Dendritic cell treated with granulocyte-macrophage colony-stimulating factor and Interleukin-4, amounts not matched to agents 40 ng/mL and 50 ng/mL, for 4 days (primary cell): ENCODE measurements at regions of chr18 and their contacts with region 1.

Region 1: DNA sequence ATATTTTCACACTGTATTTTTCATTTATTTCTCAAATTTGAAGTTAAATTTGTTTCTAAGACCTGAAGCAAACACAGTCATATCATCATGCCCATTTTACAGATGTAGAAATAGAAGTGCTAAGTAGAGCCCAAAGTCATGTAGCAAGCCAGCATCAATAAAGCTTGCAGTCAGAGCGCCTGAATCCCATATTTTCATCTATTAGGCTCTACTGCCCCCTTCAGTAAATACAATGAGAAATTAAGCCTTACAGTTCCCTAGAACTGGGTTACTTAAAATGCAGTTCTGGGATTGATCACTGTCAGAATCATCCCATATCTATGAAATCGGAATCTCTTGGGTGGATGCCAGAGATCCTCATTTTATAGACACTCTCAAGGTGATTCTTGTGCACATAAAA is 419.9 kb downstream of the TGIF1 start:
- H3K4me3 Mint-ChIP-seq: no peak overlapping the region
- H3K27ac Mint-ChIP-seq: no peak overlapping the region
- H3K4me1 Mint-ChIP-seq: peaks cover 30% of the 10 kb centered on the region
- H3K27me3 Mint-ChIP-seq: no peaks in the 10 kb centered on the region

Region 2: DNA sequence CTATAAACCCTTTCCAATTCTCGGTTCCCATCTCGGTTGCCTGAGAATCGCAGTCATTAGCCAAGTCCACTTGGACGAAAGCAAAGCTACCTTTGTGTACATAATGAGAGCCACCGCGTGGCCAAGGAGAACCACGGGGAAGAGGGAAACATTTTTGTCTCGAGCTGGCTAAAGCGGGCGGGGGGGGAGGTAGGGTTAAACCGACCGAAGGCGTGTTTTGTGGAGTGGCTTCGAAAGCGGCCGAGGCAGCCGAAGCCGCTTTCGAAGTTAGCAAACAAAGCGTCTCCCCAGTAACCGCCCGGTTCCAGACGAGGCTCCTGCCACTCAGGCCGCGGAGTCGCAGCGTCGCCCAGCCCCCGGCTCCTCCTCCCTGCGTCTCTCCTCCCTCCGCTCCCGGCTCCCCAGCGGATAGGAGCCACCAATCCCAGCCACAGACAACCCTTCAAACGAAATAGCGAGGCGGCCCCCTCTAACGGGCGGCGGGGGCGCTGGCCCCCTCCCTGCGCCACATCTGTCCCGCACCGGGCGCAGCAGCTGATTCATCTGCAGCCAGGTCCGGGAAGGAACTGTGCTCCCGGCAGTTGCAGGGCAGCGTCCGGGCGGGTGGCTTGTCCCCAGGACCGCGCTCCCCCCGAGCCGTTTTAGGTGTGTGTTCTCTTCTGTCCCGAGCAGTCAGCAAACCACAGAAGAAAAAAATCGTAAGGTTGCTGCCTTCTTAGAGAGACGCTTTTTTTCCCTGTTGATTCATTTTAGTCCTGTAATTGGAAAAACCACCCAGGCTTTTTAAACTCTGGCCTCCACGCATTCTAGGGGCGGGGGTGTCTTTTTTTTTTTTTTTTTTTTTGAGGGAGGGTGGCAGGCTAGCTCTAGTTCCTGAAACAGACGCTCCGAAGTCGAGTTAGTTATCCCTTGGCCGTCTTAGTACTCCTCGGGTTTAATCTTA is 421.7 kb before region 1 on chr18:
- intact Hi-C with region 1: loop called (anchors 10 kb)
- H3K4me3 Mint-ChIP-seq: peak overlapping the region; percentile 90
- H3K27ac Mint-ChIP-seq: peak overlapping the region; percentile 99
- H3K4me1 Mint-ChIP-seq: peaks cover 33% of the 10 kb centered on the region
- H3K27me3 Mint-ChIP-seq: no peaks in the 10 kb centered on the region

Region 3: DNA sequence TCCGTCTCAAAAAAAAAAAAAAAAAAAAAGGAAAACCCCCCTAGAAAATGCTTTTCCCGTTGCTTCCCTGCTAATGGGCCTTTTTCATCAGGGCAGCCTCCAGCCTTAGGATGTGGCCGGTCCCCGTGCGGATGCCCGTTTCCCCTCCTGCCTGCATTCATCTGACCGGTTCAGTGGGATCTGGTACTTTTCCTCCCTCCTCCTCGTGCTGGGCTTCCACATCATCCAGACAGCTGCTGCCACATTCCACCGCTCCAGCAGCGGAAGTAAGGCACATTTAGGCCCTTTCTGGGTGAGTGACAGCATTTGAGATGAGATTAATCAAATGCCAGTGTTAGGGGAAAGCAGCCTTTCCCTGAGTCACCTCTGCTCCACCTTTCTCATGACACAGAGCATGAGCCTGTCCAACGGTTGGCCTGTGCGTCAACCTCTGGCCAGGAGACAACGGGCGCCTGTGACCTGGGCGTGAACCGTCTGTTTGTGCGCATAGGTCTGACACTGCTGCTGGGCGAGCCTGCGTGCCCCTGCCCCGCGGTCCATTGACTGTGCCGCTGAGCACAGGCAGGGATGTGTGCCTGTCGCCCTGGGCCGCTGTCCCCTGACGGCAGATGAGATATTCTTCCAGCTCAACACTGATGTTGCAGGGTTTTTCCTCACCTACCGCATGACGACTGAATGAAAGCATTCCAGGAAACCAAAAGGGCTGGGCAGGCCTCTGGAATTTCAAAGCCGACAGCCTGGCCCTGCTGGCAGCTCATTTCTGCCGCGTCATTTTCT is 245.9 kb before region 1 on chr18:
- intact Hi-C with region 1: no loop called
- H3K4me3 Mint-ChIP-seq: no peak overlapping the region
- H3K27ac Mint-ChIP-seq: peak overlapping the region; percentile 60
- H3K4me1 Mint-ChIP-seq: peaks cover 23% of the 10 kb centered on the region
- H3K27me3 Mint-ChIP-seq: no peaks in the 10 kb centered on the region

Region 4: DNA sequence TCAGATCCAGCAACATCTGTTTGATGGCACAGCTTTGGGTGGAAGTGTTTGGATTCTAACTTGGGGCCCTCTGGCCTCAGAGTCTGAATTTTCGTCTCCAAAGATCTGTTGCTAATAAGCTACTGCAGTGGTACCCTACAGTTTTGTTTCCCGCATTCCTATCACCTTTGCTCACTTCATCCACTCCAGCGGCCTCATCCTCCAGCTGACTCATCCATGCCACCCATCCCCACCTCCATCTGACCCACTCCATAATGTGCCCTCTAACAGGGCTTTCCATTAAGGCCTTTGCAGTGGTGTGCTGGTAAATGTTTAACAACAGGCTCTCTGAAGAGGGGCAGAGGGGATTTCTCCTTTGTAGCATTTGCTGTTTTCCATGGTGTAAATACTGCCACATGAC is 194.4 kb before region 1 on chr18:
- intact Hi-C with region 1: loop called (anchors 10 kb)
- H3K4me3 Mint-ChIP-seq: no peak overlapping the region
- H3K27ac Mint-ChIP-seq: no peak overlapping the region
- H3K4me1 Mint-ChIP-seq: peaks cover 39% of the 10 kb centered on the region
- H3K27me3 Mint-ChIP-seq: peaks cover 3% of the 10 kb centered on the region

Region 5: GRCh38 chr18:3771121-3771971 is 98.5 kb before region 1 on chr18:
- intact Hi-C with region 1: loop called (anchors 2 kb)
- H3K4me3 Mint-ChIP-seq: peak overlapping the region; percentile 80
- H3K27ac Mint-ChIP-seq: peak overlapping the region; percentile 40
- H3K4me1 Mint-ChIP-seq: peaks cover 14% of the 10 kb centered on the region
- H3K27me3 Mint-ChIP-seq: peaks cover 5% of the 10 kb centered on the region

Region 6: DNA sequence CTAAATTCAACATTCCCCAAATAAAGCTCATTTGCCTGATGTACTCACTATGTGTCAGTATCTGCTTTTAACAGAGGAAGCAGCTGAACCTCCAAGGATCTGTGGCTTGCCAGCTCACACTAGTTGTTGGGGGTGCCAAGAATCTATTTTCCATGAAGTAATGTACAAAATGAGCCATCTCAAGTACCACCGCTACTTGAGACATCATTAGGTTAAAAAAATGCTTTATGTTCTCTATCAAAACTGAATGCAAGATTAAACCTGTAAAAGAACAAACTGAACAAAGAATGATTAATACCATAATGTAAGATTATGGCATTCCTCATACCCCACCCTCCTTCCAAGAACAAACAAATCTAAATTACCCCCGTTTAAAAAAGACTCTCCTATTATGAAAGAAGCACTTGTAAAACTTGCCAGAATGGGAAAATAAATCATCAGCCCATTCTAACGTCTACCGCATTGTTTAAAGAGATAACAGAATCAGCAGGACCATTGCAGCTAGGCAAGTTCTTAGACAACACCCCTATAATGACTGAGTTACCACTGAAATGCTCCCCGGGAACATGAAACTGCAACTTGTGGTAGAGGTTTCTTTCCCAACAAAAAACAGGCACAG is 113.6 kb after region 1 on chr18:
- intact Hi-C with region 1: no loop called
- H3K4me3 Mint-ChIP-seq: no peak overlapping the region
- H3K27ac Mint-ChIP-seq: no peak overlapping the region
- H3K4me1 Mint-ChIP-seq: peaks cover 6% of the 10 kb centered on the region
- H3K27me3 Mint-ChIP-seq: peaks cover 4% of the 10 kb centered on the region